ENCODE measurements at regions of chr5 and their contacts with region 1.

Region 1: GRCh38 chr5:87231037-87231819 is 36.5 kb upstream of the RASA1 start:
- DNase-seq: peak; percentile 7 to 38 (median 27)
- H3K4me3 ChIP-seq: no peak overlapping the region
- H3K4me3 Mint-ChIP-seq: peak overlapping the region in 1 of 8 donors; percentile 23
- H3K27ac ChIP-seq: no peak overlapping the region
- H3K27ac Mint-ChIP-seq: peak overlapping the region in 1 of 7 donors; percentile 68
- H3K4me1 ChIP-seq: peaks cover 7% of the 10 kb centered on the region
- H3K4me1 Mint-ChIP-seq: peaks cover 7 to 10% (median 7%) of the 10 kb centered on the region in 4 donors
- H3K27me3 ChIP-seq: no peaks in the 10 kb centered on the region
- H3K27me3 Mint-ChIP-seq: no peaks in the 10 kb centered on the region

Region 2: DNA sequence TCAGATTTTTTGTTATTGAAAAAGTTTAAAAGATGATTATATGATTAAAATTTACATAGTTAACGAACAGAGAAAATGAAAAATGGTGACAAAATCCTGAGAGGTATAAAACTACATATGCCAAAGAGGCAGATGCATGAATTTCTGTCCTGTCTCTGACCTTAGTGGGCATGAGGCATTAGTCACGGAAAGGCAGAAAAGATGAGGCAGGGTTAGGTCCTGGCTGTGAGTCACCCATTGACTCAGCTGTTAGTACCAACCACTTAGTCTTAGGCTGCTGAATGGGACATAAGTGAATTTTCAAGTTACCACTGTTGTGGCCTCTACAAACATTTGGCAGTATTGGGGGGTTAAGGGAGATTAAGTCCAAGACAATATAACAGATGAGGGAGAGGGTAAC is 69.5 kb after region 1 on chr5:
- CTCF ChIA-PET with region 1: no interaction called
- POLR2A ChIA-PET with region 1: no interaction called
- intact Hi-C with region 1: loop called (anchors 2 kb)
- DNase-seq: peak in 1 of 5 donors; percentile 45
- H3K4me3 ChIP-seq: no peak overlapping the region
- H3K4me3 Mint-ChIP-seq: no peak overlapping the region
- H3K27ac ChIP-seq: no peak overlapping the region
- H3K27ac Mint-ChIP-seq: peak overlapping the region in 1 of 7 donors; percentile 68
- H3K4me1 ChIP-seq: peaks cover 36% of the 10 kb centered on the region
- H3K4me1 Mint-ChIP-seq: peaks cover 56 to 75% (median 61%) of the 10 kb centered on the region in 4 donors
- H3K27me3 ChIP-seq: no peaks in the 10 kb centered on the region
- H3K27me3 Mint-ChIP-seq: no peaks in the 10 kb centered on the region

Measured in CD4-positive, alpha-beta memory T cell (primary cell).